ENCODE measurements at regions of chr11 and their contacts with region 1.

Region 1: DNA sequence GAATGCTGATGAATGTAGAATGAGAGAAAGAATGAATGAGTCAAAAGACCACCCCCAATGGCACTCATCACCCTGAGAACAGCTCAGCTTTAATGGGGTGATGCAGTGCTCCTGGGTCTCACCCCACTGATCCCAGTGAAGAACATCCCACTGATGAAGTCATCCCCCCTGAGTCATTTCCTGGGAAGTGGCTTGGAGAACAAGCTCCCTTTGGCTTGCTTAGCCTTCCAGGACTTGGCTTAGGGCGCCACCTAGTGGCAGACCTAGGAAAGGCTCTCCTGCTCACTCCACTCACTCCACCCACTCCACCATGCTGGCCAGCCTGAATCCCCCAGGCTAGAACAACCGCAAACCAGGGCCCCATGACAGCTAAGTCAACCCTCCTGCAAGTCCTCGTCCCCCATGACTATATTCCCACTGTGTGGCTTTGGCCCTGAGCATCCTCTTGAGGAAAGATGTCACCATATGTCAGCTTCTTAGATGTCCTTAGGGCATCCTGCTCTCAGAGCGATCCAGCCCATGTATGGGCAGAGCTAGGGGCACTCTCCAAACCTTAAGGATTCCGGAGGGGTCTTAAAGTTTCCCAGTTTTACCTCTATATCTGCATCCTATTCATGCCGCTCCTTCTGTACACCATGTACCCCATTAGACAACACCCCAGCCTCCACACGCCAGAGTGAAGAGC is 17.8 kb upstream of the TMPRSS13 start:
- DNase-seq: peak; percentile 89
- ATAC-seq: peak; percentile 47
- H3K4me3 Mint-ChIP-seq: no peak overlapping the region
- H3K27ac Mint-ChIP-seq: peak overlapping the region; percentile 68
- H3K4me1 Mint-ChIP-seq: peaks cover 85% of the 10 kb centered on the region
- H3K27me3 Mint-ChIP-seq: no peaks in the 10 kb centered on the region

Region 2: GRCh38 chr11:117426269-117426685 is 520.7 kb before region 1 on chr11:
- CTCF ChIA-PET with region 1: interaction called, 18 read pairs
- DNase-seq: peak; percentile 78
- ATAC-seq: peak; percentile 71
- H3K4me3 Mint-ChIP-seq: no peak overlapping the region
- H3K27ac Mint-ChIP-seq: no peak overlapping the region
- H3K4me1 Mint-ChIP-seq: peaks cover 8% of the 10 kb centered on the region
- H3K27me3 Mint-ChIP-seq: peaks cover 3% of the 10 kb centered on the region

Region 3: GRCh38 chr11:117817368-117818040 is 129.5 kb before region 1 on chr11:
- CTCF ChIA-PET with region 1: interaction called, 302 read pairs
- DNase-seq: peak; percentile 93
- ATAC-seq: peak; percentile 43
- H3K4me3 Mint-ChIP-seq: peak overlapping the region; percentile 40
- H3K27ac Mint-ChIP-seq: peak overlapping the region; percentile 98
- H3K4me1 Mint-ChIP-seq: peaks cover 69% of the 10 kb centered on the region
- H3K27me3 Mint-ChIP-seq: no peaks in the 10 kb centered on the region

Region 4: DNA sequence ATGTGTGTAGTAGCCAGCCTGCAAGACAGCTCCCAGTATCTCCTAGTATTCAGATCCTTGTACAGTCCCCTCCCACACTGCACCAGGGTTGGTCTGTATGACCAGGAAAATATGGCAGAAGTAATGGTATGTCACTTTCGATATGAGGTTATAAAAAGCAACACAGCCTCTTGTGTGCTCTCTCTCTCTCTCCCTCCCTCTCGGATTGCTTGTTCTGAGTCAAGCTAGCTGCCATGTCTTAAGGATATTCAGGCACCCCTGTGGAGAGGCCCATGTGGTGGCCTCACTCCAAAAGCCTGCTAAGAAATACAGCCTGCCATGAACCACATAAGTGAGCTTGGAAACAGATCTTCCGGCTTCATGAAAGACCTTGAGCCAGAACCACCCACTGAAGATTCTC is 95.9 kb before region 1 on chr11:
- CTCF ChIA-PET with region 1: interaction called, 173 read pairs
- DNase-seq: peak; percentile 18
- ATAC-seq: no peak
- H3K4me3 Mint-ChIP-seq: no peak overlapping the region
- H3K27ac Mint-ChIP-seq: no peak overlapping the region
- H3K4me1 Mint-ChIP-seq: peaks cover 9% of the 10 kb centered on the region
- H3K27me3 Mint-ChIP-seq: peaks cover 25% of the 10 kb centered on the region

Region 5: GRCh38 chr11:117919781-117920221 is 27.2 kb before region 1 on chr11:
- CTCF ChIA-PET with region 1: interaction called, 14 read pairs
- DNase-seq: no peak
- ATAC-seq: peak; percentile 83
- H3K4me3 Mint-ChIP-seq: no peak overlapping the region
- H3K27ac Mint-ChIP-seq: no peak overlapping the region
- H3K4me1 Mint-ChIP-seq: peaks cover 17% of the 10 kb centered on the region
- H3K27me3 Mint-ChIP-seq: no peaks in the 10 kb centered on the region

Region 6: DNA sequence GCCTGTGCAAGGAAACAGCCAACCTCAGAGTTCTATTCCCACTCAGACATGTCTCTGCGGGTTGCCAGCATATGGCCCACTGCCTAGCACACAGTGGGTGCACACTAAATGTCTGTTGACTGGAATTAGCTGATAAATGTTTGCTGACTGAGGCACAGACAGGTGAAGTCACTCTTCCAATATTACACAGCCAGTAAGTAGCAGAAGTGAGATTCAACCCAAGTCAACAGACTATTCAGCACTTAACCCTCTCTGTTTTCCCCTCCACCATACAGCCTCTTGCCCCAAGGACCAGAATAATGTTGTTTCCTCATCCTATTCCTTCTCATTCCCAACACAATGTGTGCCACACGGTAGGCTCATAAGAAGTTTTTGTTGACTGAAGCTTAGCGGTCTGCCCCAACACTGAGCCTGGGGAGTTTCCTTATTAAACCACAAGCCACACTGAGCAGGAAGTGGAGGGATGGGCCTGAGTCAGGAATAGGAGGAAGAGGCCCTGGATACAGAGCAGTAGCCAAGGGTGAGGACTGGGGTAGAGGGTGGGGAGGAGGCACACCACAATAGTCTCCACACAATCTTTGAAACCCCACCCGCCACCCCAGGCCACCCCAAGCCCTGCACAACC is 23.5 kb after region 1 on chr11:
- CTCF ChIA-PET with region 1: interaction called, 459 read pairs
- DNase-seq: peak; percentile 70
- ATAC-seq: peak; percentile 67
- H3K4me3 Mint-ChIP-seq: peak overlapping the region; percentile 7
- H3K27ac Mint-ChIP-seq: peak overlapping the region; percentile 75
- H3K4me1 Mint-ChIP-seq: peaks cover 62% of the 10 kb centered on the region
- H3K27me3 Mint-ChIP-seq: no peaks in the 10 kb centered on the region

Region 7: GRCh38 chr11:118060869-118061268 is 113.9 kb after region 1 on chr11:
- CTCF ChIA-PET with region 1: interaction called, 284 read pairs
- DNase-seq: no peak
- ATAC-seq: peak; percentile 36
- H3K4me3 Mint-ChIP-seq: no peak overlapping the region
- H3K27ac Mint-ChIP-seq: no peak overlapping the region
- H3K4me1 Mint-ChIP-seq: peaks cover 23% of the 10 kb centered on the region
- H3K27me3 Mint-ChIP-seq: peaks cover 12% of the 10 kb centered on the region